Mammary epithelial cell (primary cell): ENCODE measurements at regions of chr3 and their contacts with region 1.

Region 1: GRCh38 chr3:179098388-179099077 is 26.9 kb upstream of the ZMAT3 start:
- DNase-seq: peak; percentile 72
- H3K4me3 ChIP-seq: no peak overlapping the region
- H3K27ac ChIP-seq: no peak overlapping the region
- H3K4me1 ChIP-seq: peaks cover 5% of the 10 kb centered on the region
- H3K27me3 ChIP-seq: no peaks in the 10 kb centered on the region
- CTCF ChIP-seq: peak in 1 of 2 donors; percentile 19

Region 2: DNA sequence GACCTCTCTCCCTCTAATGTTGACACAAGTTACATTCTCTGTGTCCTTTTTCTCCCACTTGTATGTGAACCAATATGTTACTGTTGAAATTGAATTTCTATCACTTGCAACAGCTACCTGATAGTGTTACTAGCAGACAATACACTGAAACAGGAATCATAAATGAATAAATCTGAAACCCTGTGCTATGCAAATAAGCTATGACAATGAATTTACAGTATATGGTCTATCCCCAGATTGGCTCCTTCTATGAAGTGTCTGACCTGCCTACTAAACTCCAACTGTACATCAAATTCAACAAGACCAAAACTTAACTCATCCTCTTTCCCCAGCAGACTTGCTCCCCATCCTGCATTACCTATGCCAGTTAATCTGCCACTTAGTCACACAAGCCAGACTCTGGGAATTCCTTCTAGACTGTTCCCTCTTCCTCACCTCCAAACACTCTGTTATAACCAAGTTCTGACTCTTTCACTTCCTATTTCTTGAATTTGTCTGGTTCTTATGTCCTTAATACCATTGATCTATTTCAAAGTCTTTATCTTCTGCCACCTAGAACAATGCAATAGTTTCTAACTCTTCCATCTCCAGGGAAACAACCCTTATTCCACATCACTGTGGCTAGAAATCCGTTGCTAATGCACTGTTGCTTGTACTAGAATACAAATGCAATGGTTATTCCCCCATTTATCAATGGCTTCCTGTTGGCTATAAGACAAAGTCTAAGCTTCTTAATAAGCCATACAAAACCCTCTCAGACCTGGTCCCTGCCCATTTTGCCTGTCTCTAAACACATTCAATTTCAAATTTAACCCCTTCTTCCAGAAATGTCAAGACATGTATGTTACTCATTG is 210.9 kb after region 1 on chr3:
- CTCF ChIA-PET with region 1: no interaction called
- dilution Hi-C with region 1: no loop called
- in situ Hi-C with region 1: loop called (anchors 10 kb)
- intact Hi-C with region 1: no loop called
- DNase-seq: no peak
- H3K4me3 ChIP-seq: no peak overlapping the region
- H3K27ac ChIP-seq: no peak overlapping the region
- H3K4me1 ChIP-seq: no peaks in the 10 kb centered on the region
- H3K27me3 ChIP-seq: no peaks in the 10 kb centered on the region
- CTCF ChIP-seq: no peak